Vagina (tissue), 2 donors: ENCODE measurements at regions of chr12 and their contacts with region 1.

Region 1: DNA sequence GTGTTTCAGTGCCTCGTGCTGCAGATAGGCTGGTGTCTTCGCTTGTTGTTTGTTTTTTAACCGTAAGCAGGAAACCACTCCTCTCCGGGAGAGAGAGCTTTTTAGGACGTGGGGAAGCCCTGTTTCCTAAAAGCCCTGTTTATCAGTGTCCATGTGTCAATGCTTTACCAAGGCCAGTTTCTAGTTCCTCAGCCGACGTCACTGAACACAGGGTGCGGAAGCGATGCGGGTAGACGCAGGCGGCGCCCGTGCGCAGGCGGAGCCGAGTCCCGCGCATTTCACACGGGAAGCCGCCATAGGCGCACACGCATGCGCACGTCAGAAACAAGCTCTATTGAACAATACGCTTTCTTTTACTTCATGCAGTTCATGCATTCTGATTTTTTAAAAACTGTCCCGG is 79.8 kb downstream of the GLT1D1 start:
- DNase-seq: no peak
- H3K4me3 ChIP-seq: no peak overlapping the region
- H3K27ac ChIP-seq: no peak overlapping the region
- H3K4me1 ChIP-seq: no peaks in the 10 kb centered on the region
- H3K27me3 ChIP-seq: no peaks in the 10 kb centered on the region
- CTCF ChIP-seq: no peak
- POLR2A ChIP-seq: no peak

Region 2: GRCh38 chr12:128791395-128792322 is 141.4 kb before region 1 on chr12:
- intact Hi-C with region 1: loop called (anchors 2 kb)
- DNase-seq: peak in 1 of 2 donors; percentile 91
- H3K4me3 ChIP-seq: no peak overlapping the region
- H3K27ac ChIP-seq: peak overlapping the region; percentile 36
- H3K4me1 ChIP-seq: peaks cover 19% of the 10 kb centered on the region
- H3K27me3 ChIP-seq: no peaks in the 10 kb centered on the region
- CTCF ChIP-seq: no peak
- POLR2A ChIP-seq: no peak

Region 3: GRCh38 chr12:129016159-129016558 is 83.1 kb after region 1 on chr12:
- intact Hi-C with region 1: no loop called
- DNase-seq: no peak
- H3K4me3 ChIP-seq: no peak overlapping the region
- H3K27ac ChIP-seq: no peak overlapping the region
- H3K4me1 ChIP-seq: no peaks in the 10 kb centered on the region
- H3K27me3 ChIP-seq: no peaks in the 10 kb centered on the region
- CTCF ChIP-seq: no peak
- POLR2A ChIP-seq: no peak